ENCODE measurements at regions of chr21 and their contacts with region 1.

Region 1: GRCh38 chr21:25890001-25890400 is 155.2 kb downstream of the GABPA start:
- DNase-seq: no peak
- ATAC-seq: no peak
- H3K4me3 ChIP-seq: no peak overlapping the region
- H3K27ac ChIP-seq: no peak overlapping the region
- H3K4me1 ChIP-seq: no peaks in the 10 kb centered on the region
- H3K27me3 ChIP-seq: no peaks in the 10 kb centered on the region
- CTCF ChIP-seq: no peak
- POLR2A ChIP-seq: no peak

Region 2: DNA sequence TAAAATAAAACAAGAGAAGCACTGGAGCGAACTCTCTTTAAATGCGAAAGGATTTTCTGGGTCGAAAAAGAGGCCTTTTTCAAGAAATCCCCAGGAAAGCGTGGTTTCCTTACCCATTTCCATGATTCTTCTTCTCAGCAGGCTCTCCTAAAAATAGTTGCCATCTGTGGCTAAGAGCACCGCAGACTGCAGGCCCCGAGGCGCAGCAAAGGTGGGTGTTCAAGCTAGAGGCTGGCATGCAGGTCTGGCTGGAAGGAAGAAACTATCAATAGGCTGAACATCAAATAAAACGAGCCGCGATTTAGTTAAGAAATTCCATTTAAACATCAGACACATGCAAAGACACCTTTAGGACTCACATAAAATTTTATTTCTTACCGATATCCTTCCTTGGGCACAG is 820.2 kb after region 1 on chr21:
- in situ Hi-C with region 1: loop called (anchors 10 to 25 kb)
- intact Hi-C with region 1: loop called (anchors 5 kb)
- DNase-seq: no peak
- ATAC-seq: no peak
- H3K4me3 ChIP-seq: no peak overlapping the region
- H3K27ac ChIP-seq: no peak overlapping the region
- H3K4me1 ChIP-seq: no peaks in the 10 kb centered on the region
- H3K27me3 ChIP-seq: no peaks in the 10 kb centered on the region
- CTCF ChIP-seq: no peak
- POLR2A ChIP-seq: no peak

Measured in gastrocnemius medialis (tissue), 4 donors.